ENCODE measurements at regions of chr14 and their contacts with region 1.

Region 1: DNA sequence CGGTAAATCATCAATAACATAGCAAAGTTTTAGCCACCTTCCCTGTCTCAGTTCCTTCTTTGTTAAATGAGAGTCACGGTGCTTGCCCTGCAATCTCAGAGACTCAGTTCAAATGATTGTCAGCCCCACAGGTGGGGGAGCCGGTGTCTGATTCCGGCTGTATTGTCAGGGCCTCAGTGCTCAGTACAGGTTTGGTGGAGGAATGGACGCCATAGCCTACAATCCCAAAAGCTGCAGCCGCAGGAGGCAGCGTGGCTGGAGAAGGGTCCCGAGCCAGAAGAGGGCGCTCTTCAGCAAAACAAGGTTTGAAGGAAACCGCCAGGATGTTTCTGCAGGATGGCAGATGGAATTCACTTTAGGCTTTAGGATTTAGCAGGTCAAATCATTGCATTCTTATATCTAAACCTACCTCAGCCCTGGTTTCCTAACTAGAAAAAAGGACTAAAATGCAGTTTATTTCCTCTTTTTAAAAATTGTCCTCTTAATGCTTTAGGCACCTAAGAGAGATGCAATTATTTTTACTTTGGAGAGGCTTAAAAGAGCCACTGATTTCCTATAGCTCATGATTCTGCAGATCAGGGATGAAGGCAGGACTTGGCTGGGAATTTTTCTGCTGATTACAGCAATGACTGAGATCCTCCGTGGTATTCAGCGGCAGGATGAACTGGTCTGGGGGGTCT is 29.2 kb downstream of the FOS start:
- DNase-seq: peak; percentile 90
- H3K4me3 Mint-ChIP-seq: no peak overlapping the region
- H3K27ac Mint-ChIP-seq: peak overlapping the region; percentile 5
- H3K4me1 Mint-ChIP-seq: peaks cover 32% of the 10 kb centered on the region
- H3K27me3 Mint-ChIP-seq: no peaks in the 10 kb centered on the region
- CTCF ChIP-seq: peak; percentile 85

Region 2: DNA sequence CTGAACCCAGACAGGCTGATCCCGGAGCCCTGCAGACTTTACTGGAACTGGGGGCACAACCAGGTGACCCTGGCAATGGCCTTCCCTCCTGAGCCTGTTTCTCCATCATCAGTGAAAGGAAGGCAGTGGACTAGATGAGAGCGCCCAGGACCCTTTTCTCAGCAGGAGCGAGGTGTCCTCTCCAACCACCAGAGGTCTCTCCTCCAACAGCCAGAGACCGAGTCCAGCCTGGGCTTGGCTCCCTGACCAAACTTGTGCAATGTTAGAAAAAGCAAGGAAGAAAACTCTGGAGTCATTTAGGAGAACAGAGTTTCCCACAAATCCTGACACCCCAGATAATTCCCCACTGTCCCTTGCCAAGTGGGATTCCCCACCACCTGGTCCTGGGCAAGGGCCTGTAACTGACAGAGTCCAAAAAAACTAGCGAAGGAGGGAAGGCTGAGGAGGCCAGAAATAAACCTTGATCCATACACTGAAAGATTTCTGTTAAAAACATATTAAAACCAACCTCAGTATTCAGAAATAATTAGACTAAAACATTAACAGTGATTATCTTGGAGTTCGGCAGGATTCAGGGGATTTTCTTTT is 393.8 kb before region 1 on chr14:
- CTCF ChIA-PET with region 1: interaction called, 3 read pairs
- POLR2A ChIA-PET with region 1: no interaction called
- intact Hi-C with region 1: loop called (anchors 1 kb)
- DNase-seq: peak; percentile 81
- H3K4me3 Mint-ChIP-seq: no peak overlapping the region
- H3K27ac Mint-ChIP-seq: no peak overlapping the region
- H3K4me1 Mint-ChIP-seq: peaks cover 14% of the 10 kb centered on the region
- H3K27me3 Mint-ChIP-seq: no peaks in the 10 kb centered on the region
- CTCF ChIP-seq: peak; percentile 61

Region 3: DNA sequence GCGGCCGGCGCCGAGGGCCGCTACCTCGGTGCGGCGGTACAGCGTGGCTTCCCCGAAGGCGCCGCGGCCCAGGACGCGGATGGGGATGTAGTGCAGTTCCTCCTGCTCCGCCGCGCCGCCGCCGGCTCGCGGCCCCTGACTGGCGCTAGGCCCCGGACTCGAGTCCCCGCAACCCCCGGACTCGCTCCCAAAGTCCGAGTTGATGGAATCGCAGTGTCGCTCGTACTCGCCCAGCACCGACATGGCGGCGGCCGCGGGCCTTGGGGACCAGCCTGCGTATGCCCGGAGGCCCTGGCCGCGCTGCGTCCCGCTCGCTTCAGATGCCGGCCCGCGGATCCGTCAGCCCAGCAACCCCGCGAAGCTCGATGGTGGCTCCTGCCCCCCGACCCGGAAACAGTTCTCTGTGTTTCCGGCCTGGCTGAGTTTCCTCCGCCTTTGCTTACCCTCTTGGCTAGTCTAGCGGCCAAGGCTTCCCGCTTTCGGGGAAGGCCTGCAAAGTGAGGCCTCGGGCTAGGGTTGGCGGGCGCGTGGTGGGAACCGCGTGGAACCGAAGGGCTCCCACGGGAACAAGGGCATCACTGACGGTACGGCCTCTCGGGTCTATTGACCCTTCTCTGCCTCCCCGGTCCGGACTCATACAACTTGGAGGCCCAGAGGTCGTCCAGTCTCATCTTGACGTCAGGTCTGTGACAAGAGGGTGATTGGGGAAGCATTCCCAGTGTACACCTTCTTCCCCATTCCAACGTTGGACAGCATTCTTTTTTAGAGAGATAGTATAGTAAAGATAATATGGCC is 181.0 kb before region 1 on chr14 and contains the start of gene NEK9:
- CTCF ChIA-PET with region 1: interaction called, 192 read pairs
- POLR2A ChIA-PET with region 1: interaction called, 274 read pairs
- intact Hi-C with region 1: loop called (anchors 1 kb)
- DNase-seq: peak; percentile 88
- H3K4me3 Mint-ChIP-seq: peak within 1 kb of the TSS; percentile 72
- H3K27ac Mint-ChIP-seq: peak within 1 kb of the TSS; percentile 99
- H3K4me1 Mint-ChIP-seq: peaks cover 33% of the 10 kb centered on the region
- H3K27me3 Mint-ChIP-seq: no peaks in the 10 kb centered on the region
- CTCF ChIP-seq: no peak
- total RNA-seq, gene NEK9: 112 and 113 TPM in 2 replicates

Region 4: GRCh38 chr14:75320196-75320595 is 12.4 kb after region 1 on chr14:
- CTCF ChIA-PET with region 1: interaction called, 16 read pairs
- POLR2A ChIA-PET with region 1: interaction called, 5 read pairs
- intact Hi-C with region 1: no loop called
- DNase-seq: no peak
- H3K4me3 Mint-ChIP-seq: no peak overlapping the region
- H3K27ac Mint-ChIP-seq: no peak overlapping the region
- H3K4me1 Mint-ChIP-seq: no peaks in the 10 kb centered on the region
- H3K27me3 Mint-ChIP-seq: no peaks in the 10 kb centered on the region
- CTCF ChIP-seq: no peak

Region 5: GRCh38 chr14:75479770-75480600 is 172.1 kb after region 1 on chr14:
- CTCF ChIA-PET with region 1: interaction called, 14 read pairs
- POLR2A ChIA-PET with region 1: interaction called, 3 read pairs
- intact Hi-C with region 1: no loop called
- DNase-seq: no peak
- H3K4me3 Mint-ChIP-seq: no peak overlapping the region
- H3K27ac Mint-ChIP-seq: no peak overlapping the region
- H3K4me1 Mint-ChIP-seq: no peaks in the 10 kb centered on the region
- H3K27me3 Mint-ChIP-seq: no peaks in the 10 kb centered on the region
- CTCF ChIP-seq: no peak

Region 6: GRCh38 chr14:75654127-75654732 is 346.4 kb after region 1 on chr14:
- CTCF ChIA-PET with region 1: interaction called, 4 read pairs
- POLR2A ChIA-PET with region 1: no interaction called
- intact Hi-C with region 1: loop called (anchors 5 kb)
- DNase-seq: peak; percentile 76
- H3K4me3 Mint-ChIP-seq: no peak overlapping the region
- H3K27ac Mint-ChIP-seq: no peak overlapping the region
- H3K4me1 Mint-ChIP-seq: peaks cover 16% of the 10 kb centered on the region
- H3K27me3 Mint-ChIP-seq: no peaks in the 10 kb centered on the region
- CTCF ChIP-seq: peak; percentile 93